ENCODE measurements at regions of chr3 and their contacts with region 1.

Region 1: DNA sequence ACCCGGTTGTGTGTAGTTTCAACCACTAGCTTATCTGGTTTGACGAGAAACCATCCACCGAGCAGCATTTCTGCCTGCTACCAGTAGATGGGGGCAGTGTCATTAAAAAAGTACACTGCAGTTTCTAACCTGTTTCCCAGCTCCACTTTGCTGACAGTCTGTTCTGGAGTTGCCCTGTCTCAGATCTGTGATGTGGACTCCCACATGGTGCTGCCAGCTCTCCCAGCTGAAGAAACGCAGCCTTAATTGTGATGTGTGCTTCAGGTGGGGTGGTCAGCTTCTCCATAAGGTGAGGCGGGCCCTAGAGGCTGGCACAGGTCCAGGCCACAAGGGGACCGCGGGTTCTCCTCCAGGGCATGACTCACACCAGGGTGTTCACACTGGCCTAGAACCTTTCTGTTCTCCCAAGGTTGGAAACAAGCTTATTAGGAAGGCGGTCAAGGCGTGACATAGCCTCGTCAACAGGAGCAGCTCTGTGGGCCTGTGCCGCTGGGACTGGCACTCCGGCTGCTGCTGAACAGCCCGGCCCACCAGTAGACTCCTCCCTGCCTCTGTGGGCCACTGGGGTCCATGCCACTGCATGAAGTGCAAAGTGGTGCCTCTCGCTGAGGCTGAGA is 2.9 kb upstream of the FAM43A start:
- DNase-seq: peak; percentile 53
- H3K4me3 ChIP-seq: no peak overlapping the region; the same call in 1 of the 2 replicates
- CTCF ChIP-seq: peak; percentile 79

Region 2: GRCh38 chr3:194671900-194672808 is 10.6 kb before region 1 on chr3 and contains the start of gene LSG1:
- CTCF ChIA-PET with region 1: interaction called, 147 read pairs
- POLR2A ChIA-PET with region 1: interaction called, 25 read pairs
- DNase-seq: peak; percentile 71
- H3K4me3 ChIP-seq: peak within 1 kb of the TSS; percentile 89
- CTCF ChIP-seq: no peak

Region 3: GRCh38 chr3:195117978-195118581 is 435.3 kb after region 1 on chr3:
- CTCF ChIA-PET with region 1: interaction called, 53 read pairs
- POLR2A ChIA-PET with region 1: interaction called, 9 read pairs
- DNase-seq: no peak
- H3K4me3 ChIP-seq: no peak overlapping the region
- CTCF ChIP-seq: no peak

Region 4: DNA sequence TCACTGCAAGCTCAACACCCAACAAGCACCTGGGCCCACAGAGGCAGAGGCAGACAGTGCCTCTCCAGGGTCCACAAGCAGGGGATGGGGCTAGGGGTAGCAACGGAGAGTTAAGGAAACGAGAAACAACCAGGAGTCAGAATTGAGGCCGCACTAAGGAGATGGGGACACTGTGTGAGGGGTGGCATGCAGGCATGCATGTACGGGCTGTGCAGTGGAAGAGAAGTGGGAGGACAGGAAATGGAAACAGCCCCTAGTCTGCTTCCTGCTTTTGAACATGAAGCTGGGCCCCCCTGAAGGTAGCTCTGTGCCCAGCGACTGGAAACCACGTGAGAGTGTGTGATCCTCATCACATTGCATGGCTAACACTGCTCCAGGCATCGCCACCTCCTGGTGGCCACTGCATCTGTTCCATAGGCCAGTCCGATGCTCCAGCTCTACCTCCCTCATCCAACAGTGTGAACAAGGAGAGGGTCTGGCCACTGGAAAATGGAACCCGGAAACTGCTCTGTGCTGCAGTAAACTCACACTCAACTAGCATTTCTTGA is 544.2 kb after region 1 on chr3:
- CTCF ChIA-PET with region 1: interaction called, 17 read pairs
- POLR2A ChIA-PET with region 1: interaction called, 3 read pairs
- DNase-seq: no peak
- H3K4me3 ChIP-seq: no peak overlapping the region
- CTCF ChIP-seq: peak; percentile 51

Region 5: GRCh38 chr3:195259475-195260279 is 576.9 kb after region 1 on chr3:
- CTCF ChIA-PET with region 1: interaction called, 288 read pairs
- POLR2A ChIA-PET with region 1: interaction called, 26 read pairs
- DNase-seq: no peak
- H3K4me3 ChIP-seq: peak overlapping the region; percentile 75
- CTCF ChIP-seq: peak; percentile 45